CD14-positive monocyte (primary cell): ENCODE measurements at regions of chr7 and their contacts with region 1.

Region 1: GRCh38 chr7:43260980-43261878 is 148.8 kb downstream of the HECW1 start:
- DNase-seq: peak; percentile 33 to 58 (median 46)
- H3K4me3 ChIP-seq: no peak overlapping the region
- H3K4me3 Mint-ChIP-seq: no peak overlapping the region
- H3K27ac ChIP-seq: no peak overlapping the region
- H3K27ac Mint-ChIP-seq: no peak overlapping the region
- H3K4me1 ChIP-seq: no peaks in the 10 kb centered on the region
- H3K4me1 Mint-ChIP-seq: no peaks in the 10 kb centered on the region
- H3K27me3 ChIP-seq: no peaks in the 10 kb centered on the region
- H3K27me3 Mint-ChIP-seq: peaks cover 1 to 10% (median 2%) of the 10 kb centered on the region in 3 donors
- CTCF ChIP-seq: peak; percentile 92

Region 2: DNA sequence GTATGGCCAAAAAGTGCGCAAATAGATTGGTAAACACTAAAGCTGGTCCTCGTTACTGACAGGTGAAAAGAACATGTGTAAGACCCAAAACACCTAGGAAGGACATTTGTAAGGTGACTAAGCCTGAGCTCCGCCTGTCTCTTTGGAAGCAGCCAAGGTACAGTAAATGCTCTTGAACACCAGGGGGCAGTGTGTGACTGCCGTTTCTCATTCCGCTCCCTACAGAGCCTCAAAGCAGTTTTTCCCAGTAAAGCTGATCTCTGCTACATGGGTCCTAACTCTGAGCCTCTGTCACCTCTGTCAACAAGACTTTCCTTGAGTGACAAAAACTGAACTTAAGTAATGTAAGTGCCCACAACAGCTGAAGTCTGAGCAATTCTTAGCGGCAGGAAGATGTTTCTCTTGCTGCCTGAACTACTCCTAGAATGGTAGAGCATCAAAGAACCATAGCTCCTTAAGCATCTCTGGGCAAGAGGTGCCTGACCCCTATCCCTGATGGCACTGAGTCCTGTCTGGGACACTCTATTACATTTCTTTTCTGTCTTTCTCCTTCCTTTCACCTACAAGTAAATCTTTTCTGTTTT is 1320.4 kb before region 1 on chr7:
- intact Hi-C with region 1: loop called in 1 of 2 experiments (anchors 5 kb)
- DNase-seq: peak; percentile 51 to 71 (median 68)
- H3K4me3 ChIP-seq: no peak overlapping the region
- H3K4me3 Mint-ChIP-seq: no peak overlapping the region
- H3K27ac ChIP-seq: no peak overlapping the region
- H3K27ac Mint-ChIP-seq: peak overlapping the region in 1 of 7 donors; percentile 71
- H3K4me1 ChIP-seq: peaks cover 4 to 7% of the 10 kb centered on the region in 2 donors
- H3K4me1 Mint-ChIP-seq: peaks cover 8% of the 10 kb centered on the region
- H3K27me3 ChIP-seq: peaks cover 0 to 14% of the 10 kb centered on the region in 2 donors
- H3K27me3 Mint-ChIP-seq: peaks cover 10 to 25% (median 16%) of the 10 kb centered on the region in 3 donors
- CTCF ChIP-seq: peak; percentile 96

Region 3: DNA sequence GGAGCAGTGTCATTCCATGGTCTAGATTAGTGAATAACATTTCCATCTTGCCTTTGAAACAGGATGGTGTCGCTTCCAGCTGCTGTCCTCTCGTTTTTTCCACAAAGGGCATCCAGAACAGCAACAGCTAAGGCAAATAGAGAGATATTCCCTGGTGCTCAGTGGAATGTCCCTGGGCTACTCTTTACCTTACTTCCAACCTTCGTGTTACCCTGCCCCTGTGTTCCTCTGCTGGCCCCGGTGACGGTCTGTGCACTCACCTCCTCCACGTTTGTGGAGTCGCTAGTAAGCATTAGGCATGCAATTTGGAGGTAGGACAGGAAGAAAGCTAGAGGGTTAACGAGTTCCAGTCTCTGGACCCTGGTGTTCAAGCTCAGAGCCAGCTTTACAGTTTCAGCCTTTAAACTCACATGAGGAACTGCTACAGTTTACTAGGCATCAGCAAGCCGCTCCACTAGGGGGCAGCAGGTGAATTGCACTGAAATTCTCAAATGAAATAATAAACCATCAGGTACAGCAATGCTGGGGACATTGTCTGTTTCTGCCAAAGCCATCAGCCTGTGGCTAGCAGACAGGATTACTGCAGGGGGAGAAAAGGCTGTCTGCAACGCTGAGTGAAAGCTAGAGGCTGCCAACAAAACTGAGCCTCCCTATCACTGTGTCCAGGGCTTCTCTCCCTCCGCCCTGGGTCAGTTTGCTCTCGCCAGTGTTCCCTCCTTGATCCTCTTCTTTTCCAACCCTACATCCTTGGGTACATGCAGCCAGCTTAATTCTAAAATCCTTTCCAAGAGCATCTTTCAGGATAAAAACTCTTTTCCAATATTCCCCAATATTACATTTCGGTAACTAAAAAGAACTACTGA is 320.0 kb before region 1 on chr7:
- intact Hi-C with region 1: loop called in 1 of 2 experiments (anchors 5 kb)
- DNase-seq: peak; percentile 15 to 48 (median 45)
- H3K4me3 ChIP-seq: no peak overlapping the region
- H3K4me3 Mint-ChIP-seq: no peak overlapping the region
- H3K27ac ChIP-seq: no peak overlapping the region
- H3K27ac Mint-ChIP-seq: peak overlapping the region in 1 of 7 donors; percentile 46
- H3K4me1 ChIP-seq: peaks cover 0 to 3% of the 10 kb centered on the region in 2 donors
- H3K4me1 Mint-ChIP-seq: peaks cover 7% of the 10 kb centered on the region
- H3K27me3 ChIP-seq: no peaks in the 10 kb centered on the region
- H3K27me3 Mint-ChIP-seq: peaks cover 0 to 3% (median 2%) of the 10 kb centered on the region in 3 donors
- CTCF ChIP-seq: peak; percentile 94